IMR-90 (cell line): ENCODE measurements at regions of chr18 and their contacts with region 1.

Region 1: GRCh38 chr18:67515945-67516538 is 478 bp downstream of the DSEL start:
- DNase-seq: peak; percentile 85
- ATAC-seq: peak; percentile 16
- H3K4me3 ChIP-seq: peak overlapping the region; percentile 96
- H3K27ac ChIP-seq: peak overlapping the region; percentile 96
- H3K4me1 ChIP-seq: peaks cover 15% of the 10 kb centered on the region
- H3K27me3 ChIP-seq: no peaks in the 10 kb centered on the region
- CTCF ChIP-seq: peak; percentile 87
- POLR2A ChIP-seq: no peak; the same call in none of the 2 replicates
- RAD21 ChIP-seq: peak; percentile 92

Region 2: GRCh38 chr18:67159662-67160061 is 356.4 kb before region 1 on chr18:
- CTCF ChIA-PET with region 1: no interaction called
- POLR2A ChIA-PET with region 1: no interaction called
- dilution Hi-C with region 1: no loop called
- in situ Hi-C with region 1: no loop called
- intact Hi-C with region 1: no loop called
- DNase-seq: no peak
- ATAC-seq: no peak
- H3K4me3 ChIP-seq: no peak overlapping the region
- H3K27ac ChIP-seq: no peak overlapping the region
- H3K4me1 ChIP-seq: no peaks in the 10 kb centered on the region
- H3K27me3 ChIP-seq: no peaks in the 10 kb centered on the region
- CTCF ChIP-seq: no peak
- POLR2A ChIP-seq: no peak
- RAD21 ChIP-seq: no peak

Region 3: DNA sequence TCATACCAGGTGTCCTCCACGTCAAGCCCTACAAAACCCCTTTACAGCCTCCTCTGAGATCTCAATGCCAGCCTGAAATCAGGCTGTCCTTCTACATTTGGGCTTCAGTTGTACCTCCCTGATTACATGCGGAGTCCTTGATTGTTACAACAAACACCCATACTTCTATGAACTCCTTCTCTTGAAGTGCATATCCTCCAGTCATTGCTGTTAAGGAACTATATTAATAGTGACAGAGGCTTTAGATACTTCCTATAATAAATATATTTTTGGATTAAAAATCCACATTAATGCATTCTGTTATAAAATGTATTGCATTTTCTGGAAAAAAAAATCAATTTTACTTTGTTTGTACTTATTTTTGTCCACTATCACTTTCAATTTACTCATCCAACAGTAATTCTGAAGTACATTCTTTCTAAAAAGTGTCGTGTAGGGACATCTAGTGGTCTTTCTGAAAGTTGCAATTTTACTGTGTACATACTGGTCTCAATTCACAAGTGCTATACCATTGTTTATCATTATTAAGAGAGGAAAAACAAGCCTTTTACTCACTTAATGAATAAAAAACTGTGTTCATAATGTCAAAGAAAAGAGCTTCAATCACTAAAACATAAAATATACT is 315.9 kb before region 1 on chr18:
- CTCF ChIA-PET with region 1: no interaction called
- POLR2A ChIA-PET with region 1: no interaction called
- dilution Hi-C with region 1: no loop called
- in situ Hi-C with region 1: no loop called
- intact Hi-C with region 1: no loop called
- DNase-seq: peak; percentile 69
- ATAC-seq: peak; percentile 93
- H3K4me3 ChIP-seq: no peak overlapping the region
- H3K27ac ChIP-seq: no peak overlapping the region
- H3K4me1 ChIP-seq: no peaks in the 10 kb centered on the region
- H3K27me3 ChIP-seq: no peaks in the 10 kb centered on the region
- CTCF ChIP-seq: peak; percentile 72
- POLR2A ChIP-seq: no peak
- RAD21 ChIP-seq: peak; percentile 70

Region 4: DNA sequence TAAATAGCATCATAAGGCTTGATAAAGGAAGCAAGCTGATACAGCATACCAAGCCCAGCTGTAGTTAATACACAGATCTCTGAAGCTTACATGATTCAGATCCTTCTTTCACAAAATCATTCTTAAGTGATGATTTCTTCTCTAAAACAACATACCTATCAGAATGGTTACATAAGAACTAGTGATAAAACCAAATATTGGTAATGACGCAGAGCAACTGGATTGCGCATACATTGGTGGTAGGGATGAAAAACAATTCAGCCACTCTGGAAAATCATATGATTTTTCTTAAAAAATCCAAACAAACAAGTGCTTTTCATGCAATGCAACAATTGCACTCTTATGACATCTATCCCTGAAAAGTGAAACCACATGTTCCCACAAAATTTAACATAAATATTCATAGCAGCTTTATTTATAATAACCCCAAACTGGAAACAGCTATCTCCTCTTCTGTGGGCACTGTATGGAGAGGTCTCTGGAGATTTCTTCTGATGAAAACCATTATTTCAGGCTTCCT is 154.0 kb after region 1 on chr18:
- CTCF ChIA-PET with region 1: interaction called, 3 read pairs
- POLR2A ChIA-PET with region 1: interaction called, 5 read pairs
- dilution Hi-C with region 1: no loop called
- in situ Hi-C with region 1: loop called (anchors 5 kb)
- intact Hi-C with region 1: loop called (anchors 2 kb)
- DNase-seq: peak; percentile 98
- ATAC-seq: peak; percentile 87
- H3K4me3 ChIP-seq: no peak overlapping the region
- H3K27ac ChIP-seq: peak overlapping the region; percentile 100
- H3K4me1 ChIP-seq: peaks cover 12% of the 10 kb centered on the region
- H3K27me3 ChIP-seq: no peaks in the 10 kb centered on the region
- CTCF ChIP-seq: no peak
- POLR2A ChIP-seq: no peak
- RAD21 ChIP-seq: 0 out of 2 replicates have a peak, but pooled peaks have one; percentile 2

Region 5: DNA sequence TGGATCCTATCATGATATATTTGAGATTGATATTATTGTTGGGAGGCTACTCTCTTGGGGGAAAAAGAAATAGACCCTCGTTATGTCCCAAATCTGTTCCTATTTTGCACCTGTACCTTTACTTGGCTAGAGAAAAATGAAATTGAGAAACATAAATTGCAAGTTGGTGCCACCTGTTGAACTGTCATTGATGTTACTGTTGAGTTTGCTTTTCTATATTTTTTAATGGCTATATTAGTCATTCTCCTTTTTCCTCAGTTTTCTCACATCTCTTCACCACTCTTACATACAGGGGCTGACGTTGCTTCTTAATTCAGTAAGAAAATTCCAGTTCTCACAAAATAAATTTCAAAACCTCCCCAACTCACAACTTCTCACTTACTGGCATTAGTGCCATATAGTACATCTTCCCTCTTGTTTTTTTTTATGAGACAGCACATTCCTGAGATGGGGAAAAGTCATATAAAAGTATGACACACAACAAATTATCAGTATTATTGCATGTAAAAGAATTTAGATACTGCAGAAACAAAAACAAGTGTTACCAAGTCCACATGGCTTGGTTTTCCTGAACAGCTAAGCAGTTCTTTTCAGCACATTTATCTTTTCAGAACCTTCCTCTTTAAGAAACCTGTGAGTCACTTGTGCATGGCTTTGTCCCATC is 348.8 kb after region 1 on chr18:
- CTCF ChIA-PET with region 1: no interaction called
- POLR2A ChIA-PET with region 1: no interaction called
- dilution Hi-C with region 1: no loop called
- in situ Hi-C with region 1: loop called (anchors 10 kb)
- intact Hi-C with region 1: loop called (anchors 5 kb)
- DNase-seq: peak; percentile 58
- ATAC-seq: peak; percentile 41
- H3K4me3 ChIP-seq: no peak overlapping the region
- H3K27ac ChIP-seq: no peak overlapping the region
- H3K4me1 ChIP-seq: peaks cover 2% of the 10 kb centered on the region; the same call in 1 of the 2 replicates
- H3K27me3 ChIP-seq: no peaks in the 10 kb centered on the region
- CTCF ChIP-seq: no peak
- POLR2A ChIP-seq: no peak
- RAD21 ChIP-seq: no peak

Region 6: DNA sequence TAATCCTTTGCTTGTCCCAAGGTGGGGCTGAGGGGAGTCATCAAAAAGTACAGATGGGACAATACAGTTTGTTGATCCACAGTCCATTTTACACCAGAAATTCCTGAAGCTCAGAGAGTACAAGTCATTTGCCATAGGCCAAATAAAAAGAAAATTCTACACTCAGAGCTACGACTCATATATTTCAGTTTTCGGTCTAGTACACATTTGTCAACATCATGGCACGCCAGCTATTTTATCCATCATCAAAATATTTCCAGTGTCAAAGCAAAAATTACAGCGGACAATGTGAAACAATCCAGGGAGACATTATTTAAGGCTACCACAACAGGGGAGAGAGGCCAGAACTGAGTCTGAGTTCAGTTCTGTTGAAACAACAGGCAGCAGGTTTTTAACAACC is 588.0 kb after region 1 on chr18:
- CTCF ChIA-PET with region 1: no interaction called
- POLR2A ChIA-PET with region 1: no interaction called
- dilution Hi-C with region 1: no loop called
- in situ Hi-C with region 1: no loop called
- intact Hi-C with region 1: loop called (anchors 5 kb)
- DNase-seq: no peak
- ATAC-seq: no peak
- H3K4me3 ChIP-seq: no peak overlapping the region
- H3K27ac ChIP-seq: no peak overlapping the region
- H3K4me1 ChIP-seq: peaks cover 3% of the 10 kb centered on the region
- H3K27me3 ChIP-seq: no peaks in the 10 kb centered on the region
- CTCF ChIP-seq: no peak
- POLR2A ChIP-seq: no peak
- RAD21 ChIP-seq: no peak

Region 7: GRCh38 chr18:68262690-68263294 is 746.8 kb after region 1 on chr18:
- CTCF ChIA-PET with region 1: no interaction called
- POLR2A ChIA-PET with region 1: no interaction called
- dilution Hi-C with region 1: no loop called
- in situ Hi-C with region 1: no loop called
- intact Hi-C with region 1: loop called (anchors 10 kb)
- DNase-seq: peak; percentile 83
- ATAC-seq: peak; percentile 74
- H3K4me3 ChIP-seq: no peak overlapping the region
- H3K27ac ChIP-seq: no peak overlapping the region
- H3K4me1 ChIP-seq: peaks cover 6% of the 10 kb centered on the region
- H3K27me3 ChIP-seq: no peaks in the 10 kb centered on the region
- CTCF ChIP-seq: no peak
- POLR2A ChIP-seq: no peak
- RAD21 ChIP-seq: no peak

Region 8: GRCh38 chr18:68660354-68661183 is 1144.5 kb after region 1 on chr18:
- CTCF ChIA-PET with region 1: interaction called, 4 read pairs
- POLR2A ChIA-PET with region 1: interaction called, 4 read pairs
- dilution Hi-C with region 1: no loop called
- in situ Hi-C with region 1: loop called (anchors 10 kb)
- intact Hi-C with region 1: loop called (anchors 1 kb)
- DNase-seq: peak; percentile 61
- ATAC-seq: peak; percentile 81
- H3K4me3 ChIP-seq: no peak overlapping the region
- H3K27ac ChIP-seq: no peak overlapping the region
- H3K4me1 ChIP-seq: no peaks in the 10 kb centered on the region
- H3K27me3 ChIP-seq: no peaks in the 10 kb centered on the region
- CTCF ChIP-seq: peak; percentile 68
- POLR2A ChIP-seq: no peak
- RAD21 ChIP-seq: peak; percentile 73